GM10248 (cell line): ENCODE measurements at regions of chr9 and their contacts with region 1.

Region 1: DNA sequence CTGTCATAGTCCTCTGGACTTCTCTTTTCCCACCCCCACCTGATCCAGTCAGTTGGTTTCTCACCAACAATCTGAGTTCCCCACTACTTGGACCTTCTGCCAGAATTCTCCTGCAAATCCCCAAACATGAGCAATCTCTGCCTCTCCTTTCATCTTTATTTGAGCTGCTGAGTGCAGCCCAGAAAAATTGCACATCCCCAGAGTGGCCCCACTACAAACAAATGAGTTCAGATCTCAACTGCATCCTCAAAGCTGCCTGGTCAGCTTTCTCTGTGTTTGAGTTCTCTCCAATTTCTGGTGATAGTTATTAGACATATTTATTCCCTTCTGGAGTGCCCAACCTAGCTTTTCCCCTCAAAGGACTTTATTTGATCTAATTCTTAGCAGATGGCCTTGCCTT is 102.2 kb downstream of the PSAT1 start:
- DNase-seq: no peak
- CTCF ChIP-seq: no peak

Region 2: DNA sequence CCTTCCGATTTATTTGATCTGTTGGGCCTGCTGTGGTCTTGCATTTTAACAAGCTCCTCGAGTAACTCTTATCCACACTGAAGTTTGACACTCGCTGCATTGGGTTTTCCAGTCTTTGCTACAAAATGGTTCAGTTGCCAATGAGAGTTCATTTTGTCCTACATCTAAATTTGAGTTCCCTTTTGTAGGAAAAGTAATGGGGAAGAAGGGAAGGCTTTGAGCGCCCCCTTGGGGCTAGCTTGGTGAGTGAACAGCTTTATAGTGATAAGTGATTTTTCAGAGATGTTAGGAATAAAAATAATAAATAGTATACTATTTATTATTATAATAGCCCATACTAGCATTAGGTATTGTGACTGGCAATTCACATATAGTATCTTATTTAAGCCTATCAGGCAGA is 277.7 kb before region 1 on chr9:
- CTCF ChIA-PET with region 1: no interaction called
- POLR2A ChIA-PET with region 1: interaction called, 13 read pairs
- DNase-seq: no peak
- CTCF ChIP-seq: peak; percentile 37

Region 3: DNA sequence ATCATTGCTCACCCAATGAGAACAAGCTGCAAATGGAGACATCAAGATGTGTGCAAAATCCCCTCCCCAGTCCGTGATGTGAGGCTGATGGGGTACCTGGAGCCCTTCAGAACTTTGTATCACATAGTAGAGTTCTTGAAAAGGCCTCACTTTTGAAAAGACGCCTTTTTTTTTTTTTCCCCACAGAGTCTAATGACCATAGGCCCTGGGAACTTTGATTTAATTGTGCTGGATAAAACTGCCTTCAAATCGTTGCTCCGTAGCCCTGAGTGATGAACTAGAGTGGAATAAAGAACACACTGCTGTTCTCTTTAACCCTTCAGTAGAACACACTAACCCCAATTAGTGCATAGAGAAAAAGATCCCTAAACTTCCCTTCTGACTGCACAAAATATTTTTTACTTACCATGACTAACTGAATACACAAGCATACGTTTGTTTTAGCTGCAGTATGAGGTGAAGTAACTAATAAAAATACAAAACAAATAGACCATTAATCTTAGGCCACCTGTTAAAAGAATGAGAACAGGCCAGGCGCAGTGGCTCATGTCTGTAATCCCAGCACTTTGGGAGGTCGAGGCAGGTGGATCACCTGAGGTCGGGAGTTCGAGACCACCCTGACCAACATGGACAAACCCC is 87.1 kb before region 1 on chr9:
- CTCF ChIA-PET with region 1: no interaction called
- POLR2A ChIA-PET with region 1: no interaction called
- DNase-seq: no peak
- CTCF ChIP-seq: no peak